ENCODE measurements at regions of chr2 and their contacts with region 1.

Region 1: DNA sequence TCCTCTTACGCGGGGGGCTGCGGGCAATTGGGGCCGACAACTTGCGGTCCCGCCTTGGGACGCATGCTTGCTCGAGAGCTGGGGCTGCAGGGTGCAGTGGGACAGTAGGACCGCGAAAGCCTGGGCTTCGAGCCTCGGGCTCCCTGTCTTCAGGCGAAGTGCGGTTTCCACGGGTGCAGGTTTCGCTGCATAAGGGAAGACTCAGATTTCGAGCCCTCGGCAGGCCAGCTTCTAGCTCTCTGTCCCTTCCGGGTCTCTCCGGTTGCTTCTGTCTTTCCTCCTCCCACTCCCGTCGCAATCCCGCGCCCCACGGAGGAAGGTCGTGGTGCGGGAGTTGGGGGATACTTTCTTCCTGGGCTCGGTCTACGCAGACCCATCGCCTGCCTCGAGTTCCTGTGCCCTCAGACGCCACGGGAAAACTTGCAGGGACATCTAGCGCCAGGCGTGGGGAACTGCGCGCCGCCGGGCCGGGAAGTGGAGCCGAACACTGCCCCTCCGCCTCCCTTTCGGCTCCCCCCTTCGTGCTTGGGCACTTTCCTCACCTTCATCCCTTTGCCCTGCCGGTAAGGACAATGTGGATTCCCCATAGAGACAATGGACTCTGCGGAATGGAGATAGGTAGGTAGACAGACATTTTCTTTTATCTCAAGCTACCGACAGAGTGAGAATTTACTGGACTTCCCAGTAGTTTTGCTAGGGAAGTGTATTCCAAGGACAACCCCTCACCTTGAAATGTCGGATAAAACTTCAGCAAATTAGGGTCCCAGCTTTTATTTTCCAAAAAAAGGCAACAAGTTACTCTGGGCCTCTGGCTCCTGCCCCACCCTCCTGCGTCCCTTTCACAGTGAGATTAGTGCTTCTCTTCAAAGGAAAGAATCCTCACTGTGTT is 4.2 kb upstream of the HOXD13 start:
- DNase-seq: peak; percentile 22
- ATAC-seq: peak; percentile 90
- H3K4me3 ChIP-seq: no peak overlapping the region
- H3K27ac ChIP-seq: no peak overlapping the region
- H3K4me1 ChIP-seq: no peaks in the 10 kb centered on the region
- H3K27me3 ChIP-seq: no peaks in the 10 kb centered on the region
- CTCF ChIP-seq: peak; percentile 44 to 67 (median 65); a peak in 5 of 6 replicates
- POLR2A ChIP-seq: no peak
- RAD21 ChIP-seq: peak; percentile 64

Region 2: GRCh38 chr2:174503161-174503809 is 1585.0 kb before region 1 on chr2:
- CTCF ChIA-PET with region 1: no interaction called
- POLR2A ChIA-PET with region 1: no interaction called
- RAD21 ChIA-PET with region 1: no interaction called
- intact Hi-C with region 1: no loop called
- DNase-seq: no peak
- ATAC-seq: no peak
- H3K4me3 ChIP-seq: no peak overlapping the region
- H3K27ac ChIP-seq: no peak overlapping the region
- H3K4me1 ChIP-seq: no peaks in the 10 kb centered on the region
- H3K27me3 ChIP-seq: no peaks in the 10 kb centered on the region
- CTCF ChIP-seq: no peak
- POLR2A ChIP-seq: no peak
- RAD21 ChIP-seq: no peak

Region 3: DNA sequence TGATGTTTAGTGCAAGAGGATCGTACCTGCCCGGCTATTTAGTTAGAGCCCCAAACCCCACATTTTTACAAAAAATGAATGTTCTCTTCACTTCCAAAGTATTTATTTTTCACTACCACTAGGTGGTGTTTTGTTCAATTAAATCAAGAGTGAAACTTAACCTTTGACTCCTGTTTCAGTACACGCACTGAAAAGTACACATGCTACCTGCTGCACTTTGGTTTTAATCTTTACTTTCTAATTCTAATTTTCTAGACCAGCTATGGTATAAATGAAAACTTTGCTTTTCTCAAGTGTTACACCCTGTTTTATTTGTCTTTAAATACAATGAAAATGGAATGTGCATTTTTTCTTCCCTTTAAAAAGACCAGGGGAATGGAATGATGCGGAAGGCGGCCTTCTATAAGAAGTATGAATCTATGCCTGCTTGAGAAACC is 1051.7 kb before region 1 on chr2:
- CTCF ChIA-PET with region 1: no interaction called
- POLR2A ChIA-PET with region 1: no interaction called
- RAD21 ChIA-PET with region 1: no interaction called
- intact Hi-C with region 1: loop called (anchors 5 kb)
- DNase-seq: peak; percentile 12
- ATAC-seq: no peak; the same call in 1 of the 2 replicates
- H3K4me3 ChIP-seq: no peak overlapping the region
- H3K27ac ChIP-seq: no peak overlapping the region
- H3K4me1 ChIP-seq: no peaks in the 10 kb centered on the region; a peak in 1 of 4 replicates
- H3K27me3 ChIP-seq: no peaks in the 10 kb centered on the region
- CTCF ChIP-seq: peak; percentile 24 to 62 (median 61); a peak in 4 of 6 replicates
- POLR2A ChIP-seq: no peak
- RAD21 ChIP-seq: peak; percentile 61

Region 4: GRCh38 chr2:175366815-175367214 is 721.5 kb before region 1 on chr2:
- CTCF ChIA-PET with region 1: interaction called, 4 read pairs
- POLR2A ChIA-PET with region 1: no interaction called
- RAD21 ChIA-PET with region 1: no interaction called
- intact Hi-C with region 1: loop called (anchors 2 kb)
- DNase-seq: peak; percentile 38
- ATAC-seq: peak; percentile 100
- H3K4me3 ChIP-seq: no peak overlapping the region
- H3K27ac ChIP-seq: no peak overlapping the region
- H3K4me1 ChIP-seq: no peaks in the 10 kb centered on the region
- H3K27me3 ChIP-seq: no peaks in the 10 kb centered on the region
- CTCF ChIP-seq: peak; percentile 80 to 90 (median 87)
- POLR2A ChIP-seq: no peak
- RAD21 ChIP-seq: peak; percentile 88

Region 5: GRCh38 chr2:175690113-175690837 is 398.0 kb before region 1 on chr2:
- CTCF ChIA-PET with region 1: interaction called, 7 read pairs
- POLR2A ChIA-PET with region 1: no interaction called
- RAD21 ChIA-PET with region 1: no interaction called
- intact Hi-C with region 1: loop called (anchors 2 kb)
- DNase-seq: peak; percentile 58
- ATAC-seq: peak; percentile 78
- H3K4me3 ChIP-seq: no peak overlapping the region
- H3K27ac ChIP-seq: no peak overlapping the region
- H3K4me1 ChIP-seq: no peaks in the 10 kb centered on the region
- H3K27me3 ChIP-seq: no peaks in the 10 kb centered on the region
- CTCF ChIP-seq: peak; percentile 56 to 80 (median 78)
- POLR2A ChIP-seq: no peak
- RAD21 ChIP-seq: peak; percentile 78

Region 6: DNA sequence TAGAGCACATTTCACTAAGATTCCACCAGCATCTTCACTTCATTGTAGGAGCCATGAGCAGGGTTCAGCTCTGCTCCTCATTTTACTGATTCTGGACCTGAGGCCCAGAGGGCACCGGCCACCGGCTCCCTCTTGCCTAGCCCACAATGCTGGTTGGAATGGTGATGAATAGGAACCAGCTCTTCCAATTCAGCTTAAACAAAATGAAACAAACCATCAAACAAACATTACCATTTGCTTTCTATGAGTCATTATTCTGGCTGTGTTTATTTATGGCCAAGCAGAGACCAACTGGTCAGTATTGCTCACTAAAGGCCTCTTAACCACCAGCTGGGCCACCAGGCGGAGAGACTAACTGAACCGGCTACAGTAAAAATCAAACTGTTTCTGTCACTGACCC is 357.7 kb after region 1 on chr2:
- CTCF ChIA-PET with region 1: no interaction called
- POLR2A ChIA-PET with region 1: no interaction called
- RAD21 ChIA-PET with region 1: no interaction called
- intact Hi-C with region 1: no loop called
- DNase-seq: no peak
- ATAC-seq: no peak
- H3K4me3 ChIP-seq: no peak overlapping the region
- H3K27ac ChIP-seq: no peak overlapping the region
- H3K4me1 ChIP-seq: peaks cover 0 to 8% of the 10 kb centered on the region in 2 experiments; a peak in 1 of 4 replicates
- H3K27me3 ChIP-seq: no peaks in the 10 kb centered on the region
- CTCF ChIP-seq: no peak
- POLR2A ChIP-seq: no peak
- RAD21 ChIP-seq: no peak

Measured in HCT116 (cell line).